CD4-positive, alpha-beta T cell (primary cell): ENCODE measurements at regions of chr1 and their contacts with region 1.

Region 1: GRCh38 chr1:109099938-109100773 is 9.6 kb downstream of the TMEM167B start:
- DNase-seq: peak; percentile 96 to 98 (median 97)
- ATAC-seq: peak; percentile 93
- H3K4me3 ChIP-seq: peak overlapping the region; percentile 94
- H3K4me3 Mint-ChIP-seq: peak overlapping the region; percentile 95
- H3K27ac ChIP-seq: peak overlapping the region; percentile 86 to 89
- H3K27ac Mint-ChIP-seq: peak overlapping the region; percentile 92
- H3K4me1 ChIP-seq: peaks cover 22% of the 10 kb centered on the region
- H3K4me1 Mint-ChIP-seq: peaks cover 12% of the 10 kb centered on the region
- H3K27me3 ChIP-seq: no peaks in the 10 kb centered on the region
- H3K27me3 Mint-ChIP-seq: no peaks in the 10 kb centered on the region
- CTCF ChIP-seq: peak; percentile 87

Region 2: DNA sequence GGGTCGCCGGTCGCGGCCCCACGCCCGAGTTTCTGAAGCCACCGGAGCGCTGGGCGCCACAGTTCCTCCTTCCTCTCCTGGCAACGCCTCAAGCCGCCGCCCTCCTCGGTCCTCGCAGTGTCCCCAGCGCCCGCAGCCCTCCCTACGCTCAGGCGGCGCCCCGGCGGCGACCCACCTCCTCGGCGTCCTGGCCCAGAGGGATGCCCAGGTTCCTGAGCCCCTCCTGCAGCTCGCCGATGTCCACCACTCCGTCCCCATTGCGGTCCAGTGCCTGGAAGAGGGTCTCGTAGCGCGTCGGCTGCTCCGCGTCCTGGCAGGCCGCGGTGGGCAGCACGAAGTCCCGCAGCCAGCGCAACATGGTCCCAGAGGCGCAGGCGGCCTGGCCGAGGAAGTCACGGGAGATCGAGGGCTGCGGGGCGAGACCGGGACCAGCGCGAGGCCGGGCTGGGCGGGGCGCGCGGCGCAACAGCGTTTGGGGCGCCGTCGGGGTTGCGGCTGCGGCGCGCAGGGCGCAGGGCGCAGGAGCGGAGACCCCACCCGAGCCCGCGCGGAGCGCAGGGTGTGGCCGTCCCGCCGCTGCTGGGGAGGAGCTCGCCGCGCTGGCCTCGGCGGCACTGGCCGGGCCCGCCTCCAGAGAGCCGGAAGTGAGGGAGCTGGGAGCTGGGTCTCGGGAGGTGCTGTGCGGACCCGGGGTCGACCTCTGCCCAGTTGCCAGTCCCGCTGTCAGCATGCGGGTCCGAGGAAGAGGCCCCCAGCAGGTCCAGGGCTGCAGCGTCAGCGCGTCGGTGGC is 900.2 kb before region 1 on chr1 and contains the start of gene SLC25A24:
- CTCF ChIA-PET with region 1: no interaction called
- POLR2A ChIA-PET with region 1: interaction called, 14 read pairs
- intact Hi-C with region 1: no loop called
- DNase-seq: peak; percentile 51 to 89 (median 69)
- ATAC-seq: peak; percentile 92
- H3K4me3 ChIP-seq: peak within 1 kb of the TSS; percentile 97
- H3K4me3 Mint-ChIP-seq: peak within 1 kb of the TSS; percentile 94
- H3K27ac ChIP-seq: peak within 1 kb of the TSS; percentile 42 to 79
- H3K27ac Mint-ChIP-seq: peak within 1 kb of the TSS; percentile 83
- H3K4me1 ChIP-seq: peaks cover 16% of the 10 kb centered on the region
- H3K4me1 Mint-ChIP-seq: peaks cover 34% of the 10 kb centered on the region
- H3K27me3 ChIP-seq: no peaks in the 10 kb centered on the region
- H3K27me3 Mint-ChIP-seq: no peaks in the 10 kb centered on the region
- CTCF ChIP-seq: no peak
- total RNA-seq, gene SLC25A24: 4.9 to 5.5 TPM

Region 3: DNA sequence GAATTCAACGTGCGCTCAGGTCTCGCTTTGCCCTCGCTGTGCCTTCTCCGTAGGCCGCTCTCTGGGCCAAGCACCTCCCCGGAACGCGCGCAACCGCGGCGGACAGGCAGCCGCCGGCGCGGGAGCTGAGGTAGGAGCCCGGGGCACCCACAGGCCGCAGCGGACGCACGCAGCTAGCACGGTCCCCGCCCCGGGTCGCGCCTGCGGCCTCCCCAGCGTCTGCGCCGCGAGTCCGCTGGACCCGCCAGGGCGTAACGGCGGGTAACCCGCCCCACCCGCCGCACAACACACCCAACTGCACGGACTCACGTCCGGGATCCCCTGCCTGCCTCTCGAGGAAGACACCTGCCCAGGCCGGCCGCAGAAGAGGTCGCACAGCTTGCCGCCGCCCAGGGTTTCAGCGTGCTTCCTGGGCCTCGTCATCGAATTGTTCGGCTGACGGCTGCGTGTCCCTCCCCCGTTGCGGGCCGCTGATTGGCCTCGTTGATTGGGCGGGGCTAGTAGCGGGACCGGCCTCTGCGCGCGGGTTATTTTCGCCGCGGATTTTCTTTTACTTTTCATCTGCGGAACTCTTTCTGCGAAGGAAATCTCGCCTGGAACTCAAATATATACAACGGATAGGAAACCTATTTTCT is 137.0 kb before region 1 on chr1 and contains the start of gene CLCC1:
- CTCF ChIA-PET with region 1: interaction called, 5 read pairs
- POLR2A ChIA-PET with region 1: interaction called, 22 read pairs
- intact Hi-C with region 1: no loop called
- DNase-seq: peak; percentile 80 to 97 (median 88)
- ATAC-seq: peak; percentile 93
- H3K4me3 ChIP-seq: peak within 1 kb of the TSS; percentile 59
- H3K4me3 Mint-ChIP-seq: peak within 1 kb of the TSS; percentile 94
- H3K27ac ChIP-seq: peak within 1 kb of the TSS; percentile 64 to 79
- H3K27ac Mint-ChIP-seq: peak within 1 kb of the TSS; percentile 93
- H3K4me1 ChIP-seq: peaks cover 31% of the 10 kb centered on the region
- H3K4me1 Mint-ChIP-seq: peaks cover 47% of the 10 kb centered on the region
- H3K27me3 ChIP-seq: no peaks in the 10 kb centered on the region
- H3K27me3 Mint-ChIP-seq: no peaks in the 10 kb centered on the region
- CTCF ChIP-seq: no peak
- total RNA-seq, gene CLCC1: 8.6 to 9.1 TPM

Region 4: GRCh38 chr1:109027841-109028240 is 72.3 kb before region 1 on chr1:
- CTCF ChIA-PET with region 1: interaction called, 11 read pairs
- POLR2A ChIA-PET with region 1: no interaction called
- intact Hi-C with region 1: no loop called
- DNase-seq: peak in 1 of 14 experiments; percentile 18
- ATAC-seq: no peak
- H3K4me3 ChIP-seq: no peak overlapping the region
- H3K4me3 Mint-ChIP-seq: no peak overlapping the region
- H3K27ac ChIP-seq: no peak overlapping the region
- H3K27ac Mint-ChIP-seq: no peak overlapping the region
- H3K4me1 ChIP-seq: no peaks in the 10 kb centered on the region
- H3K4me1 Mint-ChIP-seq: peaks cover 6% of the 10 kb centered on the region
- H3K27me3 ChIP-seq: no peaks in the 10 kb centered on the region
- H3K27me3 Mint-ChIP-seq: no peaks in the 10 kb centered on the region
- CTCF ChIP-seq: peak; percentile 27

Region 5: DNA sequence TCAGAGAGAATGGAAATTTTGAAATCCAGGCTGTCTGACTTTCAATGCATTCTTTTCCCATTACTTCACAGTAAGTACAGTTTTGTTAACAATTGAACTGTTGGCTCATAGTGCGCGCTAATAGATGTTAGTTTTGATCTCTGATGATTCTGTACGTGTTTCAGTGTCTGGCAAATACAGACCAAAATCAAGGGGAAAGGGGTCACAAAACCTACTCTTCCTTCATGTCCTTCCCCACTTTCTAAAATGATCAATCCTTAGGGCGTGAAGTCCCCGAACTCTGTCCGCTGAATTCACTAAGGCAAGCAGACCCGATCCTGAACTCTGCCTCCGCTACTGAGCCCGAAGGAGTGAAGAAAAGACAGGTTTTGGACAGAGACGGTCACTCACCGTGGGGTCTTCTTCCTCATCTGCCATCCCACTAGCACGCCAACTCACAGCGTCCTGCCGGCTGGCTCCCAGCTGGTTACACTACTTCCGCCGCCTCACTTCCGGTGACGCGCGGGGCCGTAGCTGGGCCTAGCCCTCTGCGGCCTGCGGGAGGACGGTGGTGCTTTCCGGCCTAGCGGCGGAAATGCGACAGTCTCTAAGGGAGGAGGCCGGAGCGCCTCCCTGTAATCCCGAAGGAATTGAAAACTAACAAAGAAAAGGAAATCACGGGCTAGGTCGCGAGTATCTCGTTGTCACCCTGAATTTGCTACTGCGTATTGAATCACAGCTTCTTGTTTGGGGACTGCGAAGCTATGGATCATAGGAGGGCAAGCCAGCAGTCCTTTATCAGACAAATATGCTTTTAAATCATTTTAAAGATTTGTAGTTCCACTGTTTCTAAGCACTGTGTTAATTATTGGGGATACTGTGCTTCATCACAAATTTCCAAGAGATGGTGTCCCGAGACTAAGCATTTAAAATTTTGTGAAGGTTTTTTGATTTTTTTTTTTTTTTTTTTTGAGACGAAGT is 24.3 kb before region 1 on chr1 and contains the start of gene TAF13:
- CTCF ChIA-PET with region 1: interaction called, 26 read pairs
- POLR2A ChIA-PET with region 1: interaction called, 83 read pairs
- intact Hi-C with region 1: no loop called
- DNase-seq: peak; percentile 69 to 93 (median 82)
- ATAC-seq: peak; percentile 94
- H3K4me3 ChIP-seq: peak within 1 kb of the TSS; percentile 88
- H3K4me3 Mint-ChIP-seq: peak within 1 kb of the TSS; percentile 95
- H3K27ac ChIP-seq: peak within 1 kb of the TSS; percentile 92 to 94
- H3K27ac Mint-ChIP-seq: peak within 1 kb of the TSS; percentile 99
- H3K4me1 ChIP-seq: peaks cover 12% of the 10 kb centered on the region
- H3K4me1 Mint-ChIP-seq: peaks cover 14% of the 10 kb centered on the region
- H3K27me3 ChIP-seq: no peaks in the 10 kb centered on the region
- H3K27me3 Mint-ChIP-seq: no peaks in the 10 kb centered on the region
- CTCF ChIP-seq: no peak
- total RNA-seq, gene TAF13: 25.9 to 26.5 TPM

Region 6: GRCh38 chr1:109213785-109214468 is 113.8 kb after region 1 on chr1 and contains the start of gene SARS1:
- CTCF ChIA-PET with region 1: no interaction called
- POLR2A ChIA-PET with region 1: interaction called, 36 read pairs
- intact Hi-C with region 1: loop called in 1 of 2 experiments (anchors 5 kb)
- DNase-seq: peak; percentile 75 to 95 (median 88)
- ATAC-seq: peak; percentile 82
- H3K4me3 ChIP-seq: peak within 1 kb of the TSS; percentile 81
- H3K4me3 Mint-ChIP-seq: peak within 1 kb of the TSS; percentile 99
- H3K27ac ChIP-seq: peak within 1 kb of the TSS; percentile 73 to 74
- H3K27ac Mint-ChIP-seq: peak within 1 kb of the TSS; percentile 90
- H3K4me1 ChIP-seq: peaks cover 33% of the 10 kb centered on the region
- H3K4me1 Mint-ChIP-seq: peaks cover 41% of the 10 kb centered on the region
- H3K27me3 ChIP-seq: no peaks in the 10 kb centered on the region
- H3K27me3 Mint-ChIP-seq: no peaks in the 10 kb centered on the region
- CTCF ChIP-seq: no peak
- total RNA-seq, gene SARS1: 122 to 131 TPM

Region 7: GRCh38 chr1:109426278-109427170 is 326.4 kb after region 1 on chr1 and contains the start of gene PSMA5:
- CTCF ChIA-PET with region 1: interaction called, 4 read pairs
- POLR2A ChIA-PET with region 1: interaction called, 13 read pairs
- intact Hi-C with region 1: no loop called
- DNase-seq: peak; percentile 87 to 99 (median 92)
- ATAC-seq: peak; percentile 91
- H3K4me3 ChIP-seq: peak within 1 kb of the TSS; percentile 98
- H3K4me3 Mint-ChIP-seq: peak within 1 kb of the TSS; percentile 98
- H3K27ac ChIP-seq: peak within 1 kb of the TSS; percentile 91 to 95
- H3K27ac Mint-ChIP-seq: peak within 1 kb of the TSS; percentile 98
- H3K4me1 ChIP-seq: peaks cover 33% of the 10 kb centered on the region
- H3K4me1 Mint-ChIP-seq: peaks cover 52% of the 10 kb centered on the region
- H3K27me3 ChIP-seq: no peaks in the 10 kb centered on the region
- H3K27me3 Mint-ChIP-seq: no peaks in the 10 kb centered on the region
- CTCF ChIP-seq: no peak
- total RNA-seq, gene PSMA5: 29.8 to 33.8 TPM